Heart right ventricle (tissue), 16 donors: ENCODE measurements at regions of chr20 and their contacts with region 1.

Region 1: DNA sequence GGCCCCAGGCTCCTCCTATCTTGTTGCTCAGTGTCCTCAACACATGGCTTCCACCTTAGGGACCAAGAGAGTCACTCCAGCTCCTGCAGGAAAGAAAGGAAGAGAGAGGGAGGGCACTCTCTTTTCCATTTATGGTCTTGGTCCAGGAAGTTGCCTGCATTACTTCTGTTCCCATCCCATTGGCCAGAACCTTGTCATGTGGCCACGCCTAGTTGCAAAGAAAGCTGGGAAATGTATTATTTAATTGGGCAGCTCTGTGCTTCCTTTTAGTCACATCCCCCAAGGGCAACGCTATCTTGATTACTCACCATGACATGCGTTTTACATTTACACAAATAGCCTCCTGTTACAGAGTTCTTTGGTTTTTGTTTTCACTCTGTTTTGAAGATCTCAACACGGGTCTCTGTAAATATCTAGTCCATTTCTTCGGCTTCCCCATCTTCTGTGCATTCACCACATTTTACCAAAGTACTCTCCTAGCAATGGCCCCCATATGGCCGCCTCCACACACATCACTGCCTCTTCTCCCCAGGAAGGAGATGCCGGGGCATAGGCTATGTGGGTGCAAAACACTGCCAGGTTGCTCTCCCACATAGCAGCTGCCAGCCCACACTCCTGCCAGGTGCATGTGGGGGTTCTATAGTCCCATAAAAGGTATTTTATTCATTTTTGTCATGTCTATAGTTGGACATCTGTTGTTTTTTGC is 35.7 kb upstream of the ZMYND8 start:
- DNase-seq: no peak
- ATAC-seq: peak in 7 of 8 donors; percentile 39 to 90 (median 54)
- H3K4me3 ChIP-seq: no peak overlapping the region
- H3K27ac ChIP-seq: peak overlapping the region in 2 of 10 donors; percentile 56 to 66
- H3K4me1 ChIP-seq: peaks cover 0 to 14% (median 0%) of the 10 kb centered on the region in 9 donors
- H3K27me3 ChIP-seq: no peaks in the 10 kb centered on the region
- CTCF ChIP-seq: no peak

Region 2: DNA sequence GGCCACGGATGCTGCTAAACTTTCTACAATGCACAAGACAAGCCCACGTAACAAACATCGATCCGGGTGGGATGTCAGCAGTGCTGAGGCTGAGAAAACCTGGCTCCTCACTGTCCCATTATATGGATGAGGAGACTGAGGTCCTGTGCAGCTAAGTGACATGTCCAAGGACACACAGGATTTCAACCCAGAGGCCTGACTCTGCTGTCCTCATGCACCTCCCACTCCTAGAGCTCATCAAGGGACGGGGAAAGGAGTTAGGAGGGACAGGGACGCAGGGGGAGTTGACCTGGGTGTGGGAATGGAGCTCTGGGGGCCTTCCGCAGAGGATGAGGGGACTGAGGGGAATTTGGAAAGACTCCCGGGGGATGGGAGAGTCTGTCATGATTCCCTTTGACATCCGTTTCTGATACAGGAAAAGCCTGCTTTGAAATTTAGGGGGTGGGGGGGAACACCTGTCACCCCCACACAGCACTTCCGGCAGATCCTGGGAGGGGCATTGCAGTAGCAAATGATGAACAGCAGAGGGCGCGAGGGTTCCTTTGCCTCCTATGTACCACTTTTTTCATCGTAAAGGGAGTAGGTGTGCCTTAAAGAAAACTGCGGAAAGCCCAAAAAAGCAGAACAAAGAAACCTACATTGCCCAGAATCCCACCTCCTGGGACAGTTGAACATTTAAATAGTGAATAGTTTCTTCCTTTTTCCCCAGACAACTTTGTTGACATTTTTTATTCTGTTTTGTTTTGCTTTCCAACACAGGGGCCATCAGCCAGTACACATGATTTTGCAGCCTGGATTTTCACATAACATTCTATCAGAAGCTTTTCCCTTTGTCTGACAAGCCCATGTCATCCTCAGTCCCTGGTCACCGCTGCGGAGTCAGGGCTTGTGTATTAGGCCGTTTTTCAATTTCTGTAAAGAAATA is 634.2 kb before region 1 on chr20:
- intact Hi-C with region 1: loop called in 7 of 10 experiments (anchors 10 kb)
- DNase-seq: peak; percentile 35 to 37
- ATAC-seq: peak in 4 of 8 donors; percentile 23 to 56 (median 48)
- H3K4me3 ChIP-seq: no peak overlapping the region
- H3K27ac ChIP-seq: no peak overlapping the region
- H3K4me1 ChIP-seq: peaks cover 0 to 4% (median 0%) of the 10 kb centered on the region in 9 donors
- H3K27me3 ChIP-seq: peaks cover 0 to 13% (median 0%) of the 10 kb centered on the region in 7 donors
- CTCF ChIP-seq: peak; percentile 80 to 95 (median 92)

Region 3: DNA sequence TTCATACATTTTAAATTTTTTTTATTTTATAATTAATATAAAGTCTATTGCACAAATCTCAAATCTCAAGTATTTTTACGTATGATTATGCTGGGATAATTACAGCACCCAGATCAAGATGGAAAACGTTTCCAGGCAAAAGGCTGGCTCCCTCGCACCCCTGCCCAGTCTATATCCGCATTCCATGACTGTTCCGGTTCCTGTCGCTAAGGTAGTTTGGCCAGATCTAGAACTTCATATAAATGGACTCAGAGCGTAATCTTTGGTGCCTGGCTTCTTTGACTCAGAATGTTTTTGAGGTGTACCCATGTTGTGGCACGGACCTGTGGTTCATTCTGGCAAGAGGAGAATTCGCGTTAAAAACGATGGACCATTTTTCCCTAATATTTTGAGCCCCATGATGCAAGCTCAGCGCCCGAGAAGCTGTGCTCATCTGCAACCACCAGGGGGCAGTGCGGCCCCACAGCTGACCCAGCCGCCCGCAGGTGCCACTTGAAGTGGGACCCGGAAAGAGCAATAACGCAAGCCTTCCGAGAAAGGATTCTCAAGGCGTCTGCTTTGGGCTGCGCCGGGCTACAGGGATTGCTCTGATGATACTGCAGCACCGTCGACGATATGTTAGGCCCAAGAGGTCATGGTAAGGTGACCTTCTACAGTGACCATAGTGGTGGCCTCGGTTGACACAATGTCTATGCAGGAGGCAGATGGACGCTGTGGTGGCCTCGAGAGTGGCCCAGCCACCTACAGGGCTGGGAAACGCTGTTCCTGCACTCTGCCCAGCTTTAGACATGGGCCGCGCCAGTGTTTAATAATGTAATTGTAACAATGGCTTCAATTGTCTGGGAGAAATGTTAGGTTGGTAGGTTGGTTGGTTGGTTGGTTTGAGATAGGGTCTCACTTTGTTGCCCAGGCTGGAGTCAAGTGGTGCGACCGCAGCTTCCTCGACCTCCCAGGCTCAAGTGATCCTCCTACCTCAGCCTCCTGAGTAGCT is 195.8 kb before region 1 on chr20:
- intact Hi-C with region 1: loop called in 1 of 10 experiments (anchors 10 kb)
- DNase-seq: peak; percentile 66 to 73
- ATAC-seq: peak; percentile 63 to 89 (median 82)
- H3K4me3 ChIP-seq: peak overlapping the region in 1 of 10 donors; percentile 15
- H3K27ac ChIP-seq: no peak overlapping the region
- H3K4me1 ChIP-seq: peaks cover 0 to 16% (median 12%) of the 10 kb centered on the region in 9 donors
- H3K27me3 ChIP-seq: no peaks in the 10 kb centered on the region
- CTCF ChIP-seq: peak; percentile 92 to 98 (median 94)

Region 4: DNA sequence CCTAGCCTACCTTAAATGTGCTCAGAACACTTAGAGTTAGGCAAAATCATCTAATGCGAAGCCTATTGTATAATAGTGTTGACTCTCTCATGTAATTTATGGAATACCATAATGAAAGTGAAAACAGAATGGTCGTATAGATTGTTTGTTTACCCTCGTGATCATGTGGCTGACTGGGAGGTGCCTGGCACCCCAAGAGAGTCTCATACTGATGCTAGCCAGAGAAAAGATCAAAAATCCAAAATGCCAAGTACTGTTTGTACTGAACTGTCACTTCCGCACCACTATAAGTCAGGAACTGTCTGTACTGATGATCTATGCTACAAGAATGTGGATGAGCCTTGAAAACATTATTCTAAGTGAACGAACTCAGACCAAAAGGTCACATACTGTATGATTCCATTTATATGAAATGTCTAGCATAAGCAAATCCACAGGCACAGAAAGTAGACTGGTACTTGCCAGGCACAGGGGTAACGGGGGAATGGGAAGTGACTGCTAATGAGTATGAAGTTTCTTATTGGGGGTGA is 58.1 kb before region 1 on chr20:
- intact Hi-C with region 1: no loop called
- DNase-seq: no peak
- ATAC-seq: peak in 5 of 8 donors; percentile 26 to 88 (median 72)
- H3K4me3 ChIP-seq: peak overlapping the region in 7 of 10 donors; percentile 4 to 30 (median 23)
- H3K27ac ChIP-seq: peak overlapping the region; percentile 47 to 85 (median 71)
- H3K4me1 ChIP-seq: peaks cover 6 to 95% (median 77%) of the 10 kb centered on the region in 9 donors
- H3K27me3 ChIP-seq: no peaks in the 10 kb centered on the region
- CTCF ChIP-seq: no peak